ENCODE measurements at regions of chr1 and their contacts with region 1.

Region 1: DNA sequence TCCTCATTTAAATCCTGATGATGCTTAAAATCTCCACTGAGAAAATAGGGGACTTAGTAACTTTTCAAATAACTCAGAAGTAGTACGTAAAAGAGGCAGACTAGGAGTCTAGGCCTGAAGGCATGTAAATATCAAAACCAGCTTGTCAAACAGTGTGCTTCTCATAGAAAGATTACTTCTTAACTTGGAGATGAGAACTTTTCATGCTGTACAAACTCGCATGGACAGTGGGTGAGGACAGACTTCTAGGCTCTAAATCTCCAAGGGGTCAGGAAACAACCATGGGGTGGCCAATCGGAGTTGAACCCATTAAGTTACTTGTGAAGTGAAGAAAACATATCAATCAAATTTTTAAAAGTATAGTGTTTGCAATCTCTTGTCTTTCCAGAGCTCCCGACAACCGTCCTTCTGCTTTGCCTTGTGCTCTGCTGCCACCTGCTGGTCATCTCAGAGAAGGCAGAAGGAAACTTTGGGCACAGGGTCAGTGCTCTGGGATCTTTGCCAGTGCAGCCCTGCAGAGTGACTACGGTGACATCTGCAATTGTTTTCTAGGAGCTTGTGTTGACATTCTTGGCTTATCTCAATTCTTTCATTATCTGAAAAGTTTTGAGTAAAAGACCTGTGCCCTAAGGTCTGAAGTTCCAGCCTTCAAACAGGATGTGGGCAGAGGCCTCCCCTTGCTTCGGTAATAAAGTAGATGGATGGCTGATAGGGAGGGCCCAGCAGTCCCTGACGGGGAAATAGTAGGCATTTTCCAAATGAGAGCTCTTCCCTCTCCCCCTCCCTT is 105.1 kb upstream of the PDE4B start:
- DNase-seq: peak; percentile 88
- ATAC-seq: peak; percentile 76

Region 2: DNA sequence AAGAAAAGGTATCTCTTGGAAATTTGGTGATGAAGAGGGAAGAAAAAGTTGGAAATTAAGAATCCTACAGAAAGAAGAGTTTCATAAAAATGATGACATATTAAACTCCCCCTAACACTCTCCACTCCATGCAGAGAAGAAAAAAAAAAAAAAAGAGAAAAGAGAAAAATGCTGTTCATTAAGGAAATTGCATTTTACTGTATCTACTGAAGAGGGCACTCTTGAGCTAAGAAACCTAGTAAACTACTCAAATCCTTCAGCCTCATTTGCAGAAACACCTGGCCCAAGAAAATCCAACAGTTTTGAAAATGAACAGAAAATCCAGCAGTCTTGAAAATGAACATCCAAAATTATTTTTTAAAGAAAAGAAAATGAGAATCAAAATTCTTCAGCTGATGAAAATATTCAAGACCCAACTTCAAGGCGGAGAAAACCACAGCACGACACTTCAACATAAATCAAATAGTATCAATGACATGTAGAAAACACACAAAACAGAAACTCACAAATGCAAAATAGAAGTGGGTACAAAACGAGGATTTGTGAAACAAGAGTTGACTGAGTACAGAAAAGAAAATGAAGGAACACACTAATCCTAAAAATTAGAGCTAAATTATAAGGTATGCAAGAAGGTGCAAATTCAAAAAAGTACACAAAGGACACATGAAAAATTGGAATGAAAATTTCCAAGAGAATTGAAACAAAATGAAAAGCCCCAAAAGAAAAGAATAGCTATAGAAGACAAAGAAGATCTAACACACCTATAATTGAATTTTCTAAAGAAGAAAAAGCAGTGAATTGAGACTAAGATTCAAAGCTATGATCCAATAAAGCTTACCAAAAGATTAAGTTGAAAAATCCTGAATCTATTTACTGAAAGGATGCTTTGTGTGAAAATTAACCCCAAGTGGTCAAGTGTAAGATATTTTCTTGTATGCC is 451.5 kb before region 1 on chr1:
- intact Hi-C with region 1: loop called (anchors 1 kb)
- DNase-seq: no peak
- ATAC-seq: no peak

Measured in Right ventricle myocardium inferior (tissue), 1 donor.